Naive thymus-derived CD8-positive, alpha-beta T cell (primary cell): ENCODE measurements at regions of chr1 and their contacts with region 1.

Region 1: DNA sequence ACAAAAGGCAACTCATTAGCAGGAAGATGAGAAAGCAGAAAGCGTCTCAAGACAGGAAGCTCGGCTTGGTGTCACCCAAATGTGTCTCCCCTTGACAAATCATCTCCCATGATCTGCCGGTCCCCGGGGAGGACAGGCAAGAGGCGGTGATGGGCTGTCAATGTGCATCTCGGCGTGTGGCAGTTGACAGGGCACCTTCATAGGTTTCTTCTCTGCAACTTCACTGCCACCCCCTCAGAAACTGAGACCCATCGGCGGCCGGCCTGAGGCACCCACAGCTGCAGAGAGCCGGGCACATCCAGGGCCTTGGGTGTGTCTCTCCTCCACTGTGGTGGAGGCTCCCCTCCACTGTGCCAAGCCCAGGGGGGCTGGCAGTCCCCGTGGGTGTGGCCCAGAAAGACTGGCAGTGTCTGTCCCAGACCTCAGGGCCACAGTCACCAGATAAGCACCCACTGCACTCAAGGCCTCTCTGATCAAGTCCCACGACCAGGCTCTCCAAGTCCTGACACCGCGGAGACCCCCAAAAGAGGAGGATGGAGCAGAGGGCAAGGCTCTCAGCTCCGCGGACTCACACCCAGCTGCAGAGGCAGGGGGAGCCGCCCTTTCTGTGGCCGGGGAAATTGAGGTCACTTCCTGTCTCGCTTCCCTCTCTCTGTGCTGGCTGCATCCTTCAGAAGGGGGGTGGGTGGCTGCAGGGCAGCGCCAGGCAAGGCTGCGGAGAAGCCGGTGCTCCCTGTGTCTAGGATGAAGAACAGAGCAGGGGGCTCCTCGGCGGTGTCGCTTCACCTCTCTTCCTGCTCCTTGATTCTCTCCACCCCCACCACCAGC is 39.6 kb upstream of the LBR start:
- DNase-seq: peak; percentile 58 to 90 (median 82)
- ATAC-seq: peak; percentile 85 to 86
- H3K4me3 Mint-ChIP-seq: peak overlapping the region; percentile 89 to 97 (median 92)
- H3K27ac Mint-ChIP-seq: peak overlapping the region; percentile 92 to 99 (median 98)
- H3K4me1 Mint-ChIP-seq: peaks cover 19 to 56% (median 50%) of the 10 kb centered on the region in 4 donors
- H3K27me3 Mint-ChIP-seq: no peaks in the 10 kb centered on the region

Region 2: DNA sequence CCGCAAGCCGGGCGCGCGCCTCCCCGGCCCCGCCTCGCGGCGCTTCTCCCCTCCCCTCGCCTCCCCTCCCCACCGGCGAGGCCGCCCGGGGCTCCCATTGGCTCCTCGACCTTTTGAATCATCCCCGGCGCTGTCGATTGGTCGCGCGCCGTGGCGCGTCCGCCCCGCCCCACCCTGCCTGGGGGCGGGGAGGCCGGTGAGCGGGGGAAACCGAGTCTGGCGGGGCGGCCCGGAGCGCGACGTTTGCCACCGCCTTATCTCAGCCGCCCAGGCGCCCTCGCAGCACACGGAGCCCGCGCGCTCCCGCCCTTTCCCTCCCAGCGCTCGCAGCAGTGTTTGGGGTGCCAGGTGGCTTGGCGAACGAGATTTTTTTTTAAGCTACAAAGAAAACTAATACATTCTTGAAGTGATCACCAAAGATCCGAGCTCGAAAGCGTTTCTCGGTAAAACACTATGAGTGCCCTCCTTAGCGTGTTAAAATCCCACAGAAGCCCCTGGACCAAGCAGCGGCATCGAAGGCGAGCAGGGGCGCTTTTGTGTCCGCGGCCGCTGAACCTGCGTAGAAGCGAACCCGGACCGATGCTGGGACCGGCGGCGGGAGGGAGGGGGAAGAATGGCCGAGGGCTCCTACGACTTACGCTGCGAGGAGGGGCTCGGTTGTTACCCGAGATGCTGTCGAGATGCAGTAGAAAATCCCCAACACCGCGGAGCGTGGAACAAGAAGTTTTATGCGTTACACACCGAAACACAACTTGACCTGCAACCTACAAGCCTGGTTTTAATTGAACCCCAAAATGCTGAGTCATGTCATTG is 39.1 kb before region 1 on chr1:
- POLR2A ChIA-PET with region 1: interaction called, 136 read pairs
- DNase-seq: peak; percentile 87 to 94 (median 90)
- ATAC-seq: peak; percentile 86 to 89
- H3K4me3 Mint-ChIP-seq: peak overlapping the region; percentile 86 to 94 (median 90)
- H3K27ac Mint-ChIP-seq: peak overlapping the region; percentile 28 to 96 (median 93)
- H3K4me1 Mint-ChIP-seq: peaks cover 28 to 45% (median 39%) of the 10 kb centered on the region in 4 donors
- H3K27me3 Mint-ChIP-seq: no peaks in the 10 kb centered on the region

Region 3: GRCh38 chr1:225441314-225442122 is 25.9 kb before region 1 on chr1:
- POLR2A ChIA-PET with region 1: interaction called, 230 read pairs
- DNase-seq: peak in 1 of 10 donors; percentile 16
- ATAC-seq: no peak
- H3K4me3 Mint-ChIP-seq: peak overlapping the region; percentile 48 to 70 (median 54)
- H3K27ac Mint-ChIP-seq: peak overlapping the region; percentile 66 to 92 (median 84)
- H3K4me1 Mint-ChIP-seq: peaks cover 27 to 66% (median 56%) of the 10 kb centered on the region in 4 donors
- H3K27me3 Mint-ChIP-seq: no peaks in the 10 kb centered on the region

Region 4: DNA sequence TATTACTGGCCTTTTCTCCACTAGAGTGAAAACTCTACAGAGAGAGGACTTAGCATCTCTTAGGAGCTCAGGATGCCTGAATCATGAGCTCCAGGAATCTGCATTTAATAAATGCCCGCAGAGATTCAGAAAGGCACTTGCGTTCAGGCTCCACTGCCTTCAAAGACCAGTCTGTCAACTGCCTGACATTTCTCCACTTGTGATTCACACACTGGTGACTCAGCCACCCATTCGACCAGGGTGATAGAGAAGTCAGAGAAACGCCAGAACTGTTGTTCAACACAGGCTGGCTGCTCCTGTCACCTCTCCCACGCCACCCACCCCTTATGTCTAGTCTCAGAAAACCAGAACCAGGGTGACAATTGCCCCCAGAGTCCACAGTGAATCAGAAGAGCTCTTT is 12.7 kb before region 1 on chr1:
- POLR2A ChIA-PET with region 1: interaction called, 230 read pairs
- DNase-seq: peak in 2 of 10 donors; percentile 23 to 41
- ATAC-seq: no peak
- H3K4me3 Mint-ChIP-seq: peak overlapping the region in 3 of 10 donors; percentile 14 to 65 (median 26)
- H3K27ac Mint-ChIP-seq: peak overlapping the region in 4 of 10 donors; percentile 18 to 82 (median 76)
- H3K4me1 Mint-ChIP-seq: peaks cover 8 to 49% (median 35%) of the 10 kb centered on the region in 4 donors
- H3K27me3 Mint-ChIP-seq: no peaks in the 10 kb centered on the region

Region 5: DNA sequence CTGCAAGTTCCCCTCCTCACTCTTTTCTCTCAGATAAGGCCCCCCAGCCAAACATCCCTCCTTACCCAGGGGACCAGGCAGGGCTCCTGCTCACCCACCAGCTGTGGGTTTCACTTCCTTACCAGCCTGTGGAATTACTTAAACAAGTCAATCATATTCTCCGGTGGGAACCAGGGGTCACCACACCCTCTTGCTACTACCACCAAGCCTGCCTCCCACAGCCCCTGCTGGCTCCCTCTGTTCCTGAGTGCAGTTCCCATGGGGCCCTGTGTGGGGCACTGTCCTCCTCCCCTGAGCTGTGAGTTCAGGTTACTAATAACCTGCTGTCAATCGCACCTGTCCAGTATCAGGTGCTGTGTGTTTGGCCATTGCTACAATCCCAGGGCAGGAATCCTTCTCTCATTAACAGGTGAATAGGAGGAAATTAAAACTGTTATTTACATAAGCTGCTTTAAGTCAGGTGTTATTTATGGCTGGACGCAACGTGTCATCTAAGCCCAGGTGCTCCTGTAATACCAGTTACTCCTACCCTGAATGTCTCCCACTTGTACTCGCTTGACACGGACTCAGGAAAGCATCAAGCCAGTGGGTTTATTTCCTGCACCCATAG is 13.5 kb after region 1 on chr1:
- POLR2A ChIA-PET with region 1: interaction called, 21 read pairs
- DNase-seq: peak in 7 of 10 donors; percentile 27 to 54 (median 40)
- ATAC-seq: peak; percentile 55 to 67
- H3K4me3 Mint-ChIP-seq: peak overlapping the region in 1 of 10 donors; percentile 17
- H3K27ac Mint-ChIP-seq: peak overlapping the region in 3 of 10 donors; percentile 18 to 81 (median 71)
- H3K4me1 Mint-ChIP-seq: peaks cover 22 to 57% (median 34%) of the 10 kb centered on the region in 4 donors
- H3K27me3 Mint-ChIP-seq: peaks cover 0 to 2% (median 0%) of the 10 kb centered on the region in 5 donors

Region 6: DNA sequence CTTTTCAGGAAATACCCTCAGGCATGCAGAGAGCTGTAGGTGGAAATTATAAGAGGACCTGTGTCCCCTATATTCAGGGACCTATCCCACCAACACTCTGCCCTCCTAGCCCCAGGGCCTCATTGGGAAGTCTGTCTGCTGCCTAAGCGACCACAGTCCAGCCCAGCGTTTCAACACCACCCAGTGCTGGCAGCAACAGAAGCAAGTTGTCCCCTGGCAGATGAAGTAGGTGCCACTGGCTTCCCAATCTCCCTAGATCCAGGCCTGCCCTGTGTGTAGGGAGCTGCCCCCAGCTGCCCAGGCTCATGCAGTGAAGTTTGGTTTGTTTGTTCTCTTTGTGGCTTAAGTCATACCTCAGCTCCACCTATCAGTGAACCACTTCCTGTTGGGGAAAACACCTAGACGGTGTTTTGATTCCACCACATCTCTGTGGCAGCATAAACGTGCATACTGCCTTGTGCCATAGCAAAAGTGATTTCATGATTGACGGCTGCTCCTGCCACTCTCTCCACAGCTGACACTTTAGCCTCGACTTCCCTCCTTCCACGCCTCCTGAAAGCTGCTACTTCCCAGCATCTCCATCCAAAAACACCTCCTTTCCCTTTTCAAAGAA is 429.6 kb after region 1 on chr1:
- POLR2A ChIA-PET with region 1: interaction called, 23 read pairs
- DNase-seq: peak; percentile 21 to 92 (median 80)
- ATAC-seq: peak; percentile 88 to 92
- H3K4me3 Mint-ChIP-seq: peak overlapping the region; percentile 59 to 89 (median 82)
- H3K27ac Mint-ChIP-seq: peak overlapping the region; percentile 94 to 100 (median 97)
- H3K4me1 Mint-ChIP-seq: peaks cover 27 to 64% (median 60%) of the 10 kb centered on the region in 4 donors
- H3K27me3 Mint-ChIP-seq: no peaks in the 10 kb centered on the region

Region 7: GRCh38 chr1:225923692-225924555 is 456.5 kb after region 1 on chr1 and contains the start of gene PYCR2:
- POLR2A ChIA-PET with region 1: interaction called, 17 read pairs
- DNase-seq: peak; percentile 89 to 95 (median 94)
- ATAC-seq: peak; percentile 95 to 96
- H3K4me3 Mint-ChIP-seq: peak within 1 kb of the TSS; percentile 92 to 98 (median 96)
- H3K27ac Mint-ChIP-seq: peak within 1 kb of the TSS; percentile 91 to 98 (median 96)
- H3K4me1 Mint-ChIP-seq: peaks cover 31 to 72% (median 66%) of the 10 kb centered on the region in 4 donors
- H3K27me3 Mint-ChIP-seq: no peaks in the 10 kb centered on the region
- polyA plus RNA-seq, gene PYCR2: 75.0 to 152 (median 121) TPM